Activated T-helper 1 cell treated with anti-CD3 and anti-CD28 coated beads, Interleukin-12 subunit alpha, Interleukin-12 subunit beta, Interleukin-2, Interleukin-4 antibody, amounts not matched to agents 30 ng/mL and 10 ng/mL and 1 ng/mL, durations not matched to agents 14 hours and 24 hours and 36 hours (primary cell): ENCODE measurements at regions of chr3 and their contacts with region 1.

Region 1: DNA sequence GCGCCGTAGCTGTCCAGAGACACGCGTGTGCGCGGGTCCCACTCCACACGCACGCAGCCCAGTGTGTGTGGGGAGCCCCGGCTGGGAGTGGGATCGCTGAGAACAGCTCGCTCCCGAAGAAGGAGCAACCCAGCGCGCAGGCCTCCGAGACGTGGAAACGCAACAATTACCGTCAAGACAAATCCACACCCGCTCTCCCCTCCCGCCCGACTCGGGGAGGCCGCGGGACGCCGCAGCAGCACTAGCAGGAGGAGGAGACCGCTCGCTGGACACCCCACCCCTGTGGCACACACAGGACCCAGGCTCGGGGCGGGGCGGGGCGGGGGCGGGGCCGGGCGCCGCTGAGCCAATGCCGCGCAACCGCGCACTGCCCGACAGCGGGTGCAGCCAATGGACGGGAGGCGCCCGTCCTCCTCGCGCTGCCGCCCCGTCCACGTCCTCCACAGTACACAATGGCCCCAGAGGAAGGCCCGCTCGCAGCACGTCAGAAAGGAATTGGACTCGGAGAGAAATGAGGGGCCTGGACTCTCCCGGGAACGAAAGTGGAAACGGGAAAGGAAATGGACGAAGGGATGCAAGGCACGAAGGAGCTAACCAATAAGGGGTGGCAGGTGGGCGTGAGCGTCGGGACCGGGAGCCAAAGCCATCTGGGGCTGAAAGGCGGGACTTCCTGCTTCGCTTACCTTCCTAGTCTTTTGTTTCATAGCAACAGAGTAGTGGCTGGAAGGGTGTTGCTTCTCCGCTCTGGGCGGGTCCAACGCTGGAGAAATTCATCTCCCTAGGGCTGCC is at the start of gene CBLB:
- DNase-seq: peak; percentile 80
- H3K4me3 Mint-ChIP-seq: peak within 1 kb of the TSS; percentile 100
- H3K27ac Mint-ChIP-seq: peak within 1 kb of the TSS; percentile 99
- H3K4me1 Mint-ChIP-seq: peaks cover 48% of the 10 kb centered on the region
- H3K27me3 Mint-ChIP-seq: no peaks in the 10 kb centered on the region
- total RNA-seq, gene CBLB: 213 and 235 TPM in 2 replicates

Region 2: DNA sequence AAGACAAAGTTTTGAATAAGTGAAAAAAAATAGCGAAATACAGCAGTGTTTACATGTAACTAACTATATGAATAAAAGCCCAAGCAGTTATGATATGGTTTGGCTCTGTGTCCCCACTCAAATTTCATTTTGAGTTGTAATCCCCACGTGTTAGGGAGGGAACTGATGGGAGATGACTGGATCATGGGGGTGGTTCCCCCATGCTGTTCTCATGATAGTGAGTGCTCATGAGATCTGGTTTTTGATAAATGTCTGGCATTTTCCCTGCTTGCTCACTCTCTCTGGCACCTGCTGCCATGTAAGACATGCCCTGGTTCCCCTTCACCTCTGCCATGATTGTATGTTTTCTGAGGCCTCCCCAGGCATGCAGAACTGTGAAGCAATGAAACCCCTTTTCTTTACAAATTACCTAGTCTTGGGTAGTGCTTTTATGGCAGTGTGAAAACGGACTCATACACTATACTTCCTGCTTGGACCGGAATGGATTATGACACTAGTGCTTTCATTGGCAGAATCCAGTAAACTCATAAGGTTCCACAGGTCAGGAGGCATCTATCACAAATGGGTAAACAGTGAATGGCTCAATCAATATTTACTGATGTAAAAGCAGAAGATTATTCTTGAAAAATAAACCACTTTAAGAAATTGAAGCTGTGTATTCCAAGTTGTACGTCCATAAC is 192.2 kb before region 1 on chr3:
- intact Hi-C with region 1: loop called (anchors 1 kb)
- DNase-seq: no peak
- H3K4me3 Mint-ChIP-seq: peak overlapping the region; percentile 1
- H3K27ac Mint-ChIP-seq: peak overlapping the region; percentile 85
- H3K4me1 Mint-ChIP-seq: peaks cover 36% of the 10 kb centered on the region
- H3K27me3 Mint-ChIP-seq: no peaks in the 10 kb centered on the region

Region 3: GRCh38 chr3:105827959-105828358 is 41.0 kb before region 1 on chr3:
- intact Hi-C with region 1: loop called (anchors 1 kb)
- DNase-seq: no peak
- H3K4me3 Mint-ChIP-seq: peak overlapping the region; percentile 57
- H3K27ac Mint-ChIP-seq: peak overlapping the region; percentile 96
- H3K4me1 Mint-ChIP-seq: peaks cover 88% of the 10 kb centered on the region
- H3K27me3 Mint-ChIP-seq: no peaks in the 10 kb centered on the region

Region 4: DNA sequence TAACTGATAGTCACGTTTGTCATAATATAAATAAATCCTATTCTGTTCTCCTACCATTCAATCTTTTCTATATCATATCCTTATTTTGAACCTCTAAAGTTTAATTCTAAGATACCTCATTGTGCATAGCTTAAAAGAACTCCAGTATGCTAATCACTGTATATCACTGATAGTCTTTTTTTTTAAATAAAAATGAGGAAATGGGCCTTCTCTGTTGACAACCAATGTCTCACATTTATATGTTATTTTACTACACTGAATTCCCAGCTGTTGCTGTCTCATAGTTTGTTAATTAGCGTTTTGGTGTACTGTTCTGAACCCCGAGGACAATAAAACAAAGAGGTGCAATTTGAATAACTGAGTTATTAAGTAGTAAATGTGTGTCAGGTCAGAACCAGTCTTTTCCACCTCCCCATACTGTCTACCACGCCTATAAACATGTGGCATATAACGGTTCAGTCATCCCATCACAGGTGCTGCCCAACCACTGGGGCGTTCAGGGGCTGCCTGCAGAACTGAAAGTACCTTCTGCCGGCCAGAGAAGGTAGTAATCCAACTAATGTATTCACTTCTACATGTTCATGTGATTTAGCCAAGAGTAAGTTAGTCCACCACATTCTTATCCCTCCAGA is 15.0 kb before region 1 on chr3:
- intact Hi-C with region 1: no loop called
- DNase-seq: no peak
- H3K4me3 Mint-ChIP-seq: no peak overlapping the region
- H3K27ac Mint-ChIP-seq: no peak overlapping the region
- H3K4me1 Mint-ChIP-seq: peaks cover 56% of the 10 kb centered on the region
- H3K27me3 Mint-ChIP-seq: no peaks in the 10 kb centered on the region

Region 5: GRCh38 chr3:106013971-106014370 is 145.0 kb after region 1 on chr3:
- intact Hi-C with region 1: loop called (anchors 1 kb)
- DNase-seq: no peak
- H3K4me3 Mint-ChIP-seq: no peak overlapping the region
- H3K27ac Mint-ChIP-seq: peak overlapping the region; percentile 5
- H3K4me1 Mint-ChIP-seq: peaks cover 65% of the 10 kb centered on the region
- H3K27me3 Mint-ChIP-seq: no peaks in the 10 kb centered on the region

Region 6: DNA sequence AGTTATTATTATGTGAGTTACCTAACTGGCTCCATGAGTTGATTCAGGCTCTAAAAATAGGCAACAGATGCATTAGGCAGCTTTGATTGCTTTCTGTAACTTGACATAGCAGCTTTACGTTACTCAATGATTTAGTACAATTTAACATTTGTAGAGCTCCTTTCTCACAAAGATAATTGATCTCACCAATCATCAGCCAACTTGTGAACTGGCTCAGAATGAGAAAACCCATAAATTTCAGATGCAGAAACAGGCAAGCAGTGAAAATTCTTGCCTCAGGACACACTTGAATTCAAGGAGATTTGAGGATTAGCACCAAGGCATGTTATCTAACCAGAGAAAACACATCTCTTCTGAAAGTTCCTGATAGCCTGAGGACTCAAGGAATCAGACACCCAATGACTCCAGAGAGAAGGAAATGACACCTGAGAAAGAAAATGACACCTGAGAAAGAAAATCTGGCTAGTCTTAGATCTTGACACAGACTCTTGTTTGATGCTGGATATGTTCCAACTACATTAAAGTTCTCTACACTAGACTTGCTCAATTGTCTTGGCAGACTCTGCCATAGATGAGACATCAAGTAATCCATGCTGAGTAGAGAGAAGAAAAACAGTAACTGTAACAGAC is 314.9 kb after region 1 on chr3:
- intact Hi-C with region 1: loop called (anchors 2 kb)
- DNase-seq: no peak
- H3K4me3 Mint-ChIP-seq: peak overlapping the region; percentile 10
- H3K27ac Mint-ChIP-seq: peak overlapping the region; percentile 31
- H3K4me1 Mint-ChIP-seq: peaks cover 56% of the 10 kb centered on the region
- H3K27me3 Mint-ChIP-seq: no peaks in the 10 kb centered on the region

Region 7: DNA sequence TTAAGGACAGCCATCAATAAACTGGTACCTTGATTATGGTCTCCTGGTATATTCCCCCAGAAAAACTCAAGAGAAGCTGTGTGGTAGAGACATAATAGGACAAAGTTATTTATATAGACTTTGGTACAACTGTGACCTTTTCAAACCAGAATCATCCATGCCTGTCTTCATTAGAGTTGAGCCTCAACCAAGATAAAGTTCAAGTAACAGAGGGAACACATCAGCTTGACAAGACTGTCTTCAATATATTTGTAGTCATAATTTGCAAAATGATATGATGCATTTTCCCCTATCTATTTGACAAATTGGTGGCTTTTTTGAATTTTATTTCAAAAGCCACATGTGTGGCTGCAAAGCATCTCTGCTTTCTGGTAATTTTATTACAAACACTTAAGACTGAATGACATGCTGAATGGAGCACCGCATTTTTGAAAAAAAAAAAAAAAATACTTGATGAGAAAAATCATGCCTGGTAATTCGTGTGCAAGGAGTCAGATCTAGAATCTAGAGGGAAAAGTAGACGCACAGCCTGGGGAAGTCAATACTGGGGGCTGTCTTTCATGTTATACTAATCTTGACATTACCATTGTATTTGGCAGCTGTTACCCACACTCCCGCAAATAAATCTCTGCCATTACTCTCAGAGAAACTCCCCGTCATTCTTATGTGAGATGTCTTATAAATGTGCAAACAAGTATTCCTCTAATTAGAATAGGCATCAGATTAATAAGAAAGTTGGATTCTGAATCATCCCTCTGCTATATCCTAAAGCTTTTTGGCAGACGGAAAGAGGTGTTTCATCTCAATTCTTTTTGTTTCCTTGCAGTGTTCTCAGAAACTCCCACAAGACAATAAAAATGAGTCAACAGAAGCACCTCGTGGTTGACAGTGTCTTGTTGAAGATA is 554.6 kb after region 1 on chr3:
- intact Hi-C with region 1: loop called (anchors 1 kb)
- DNase-seq: no peak
- H3K4me3 Mint-ChIP-seq: peak overlapping the region; percentile 45
- H3K27ac Mint-ChIP-seq: peak overlapping the region; percentile 90
- H3K4me1 Mint-ChIP-seq: peaks cover 50% of the 10 kb centered on the region
- H3K27me3 Mint-ChIP-seq: no peaks in the 10 kb centered on the region